Endothelial cell of umbilical vein (primary cell): ENCODE measurements at regions of chr12 and their contacts with region 1.

Region 1: DNA sequence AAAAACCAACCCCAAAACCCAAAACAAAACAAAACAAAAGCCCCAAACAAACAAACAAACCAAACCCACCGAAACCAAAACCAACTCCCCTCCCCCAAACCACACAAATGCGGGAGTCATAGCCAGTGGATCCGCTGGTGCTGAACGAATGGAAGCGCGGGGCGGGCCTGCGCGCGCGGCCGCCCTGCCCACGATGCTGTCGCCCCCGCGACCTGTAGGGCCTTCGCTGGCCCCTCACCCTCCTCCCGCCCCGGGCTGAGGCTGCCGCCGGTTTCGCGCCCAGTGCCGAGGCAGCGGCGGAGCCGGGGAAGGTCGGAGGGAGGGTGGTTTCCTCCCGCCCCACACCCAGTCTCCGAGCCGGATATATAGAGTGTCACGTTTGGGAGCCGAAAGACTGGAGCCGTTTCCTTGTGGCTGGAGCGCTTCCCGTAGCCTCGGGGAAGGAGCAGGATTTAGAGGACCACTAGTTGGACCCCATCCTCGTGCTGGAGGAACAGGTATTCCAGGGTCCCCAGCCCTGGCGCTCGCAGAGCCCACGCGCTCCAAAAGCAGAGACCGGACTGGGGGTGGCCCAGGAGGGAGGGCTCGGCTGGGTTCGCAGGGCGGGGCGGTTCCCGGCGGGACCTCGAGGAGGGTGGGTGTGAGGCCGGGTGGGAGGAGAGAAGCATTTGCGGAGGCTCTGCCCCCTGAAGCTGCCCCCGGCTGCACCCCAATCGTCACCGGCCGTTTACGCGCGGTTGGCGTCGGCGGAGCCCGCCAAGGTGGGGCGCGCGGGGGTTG is at the start of gene FAR2:
- DNase-seq: peak; percentile 61
- H3K4me3 ChIP-seq: peak within 1 kb of the TSS; percentile 67 to 80 (median 75)
- H3K27ac ChIP-seq: peak within 1 kb of the TSS; percentile 91
- H3K4me1 ChIP-seq: peaks cover 29% of the 10 kb centered on the region
- H3K27me3 ChIP-seq: no peaks in the 10 kb centered on the region
- CTCF ChIP-seq: no peak
- POLR2A ChIP-seq: peak; percentile 79
- total RNA-seq, gene FAR2: 61.7 and 66.3 TPM in 2 replicates

Region 2: GRCh38 chr12:28865776-28866175 is 283.3 kb before region 1 on chr12:
- CTCF ChIA-PET with region 1: no interaction called
- POLR2A ChIA-PET with region 1: no interaction called
- dilution Hi-C with region 1: no loop called
- intact Hi-C with region 1: no loop called
- DNase-seq: no peak
- H3K4me3 ChIP-seq: no peak overlapping the region
- H3K27ac ChIP-seq: no peak overlapping the region
- H3K4me1 ChIP-seq: no peaks in the 10 kb centered on the region
- H3K27me3 ChIP-seq: no peaks in the 10 kb centered on the region
- CTCF ChIP-seq: no peak
- POLR2A ChIP-seq: no peak

Region 3: GRCh38 chr12:29131539-29131938 is 17.6 kb before region 1 on chr12:
- CTCF ChIA-PET with region 1: no interaction called
- POLR2A ChIA-PET with region 1: no interaction called
- dilution Hi-C with region 1: no loop called
- intact Hi-C with region 1: no loop called
- DNase-seq: peak; percentile 27
- H3K4me3 ChIP-seq: no peak overlapping the region
- H3K27ac ChIP-seq: no peak overlapping the region
- H3K4me1 ChIP-seq: peaks cover 3% of the 10 kb centered on the region
- H3K27me3 ChIP-seq: no peaks in the 10 kb centered on the region
- CTCF ChIP-seq: no peak
- POLR2A ChIP-seq: no peak

Region 4: DNA sequence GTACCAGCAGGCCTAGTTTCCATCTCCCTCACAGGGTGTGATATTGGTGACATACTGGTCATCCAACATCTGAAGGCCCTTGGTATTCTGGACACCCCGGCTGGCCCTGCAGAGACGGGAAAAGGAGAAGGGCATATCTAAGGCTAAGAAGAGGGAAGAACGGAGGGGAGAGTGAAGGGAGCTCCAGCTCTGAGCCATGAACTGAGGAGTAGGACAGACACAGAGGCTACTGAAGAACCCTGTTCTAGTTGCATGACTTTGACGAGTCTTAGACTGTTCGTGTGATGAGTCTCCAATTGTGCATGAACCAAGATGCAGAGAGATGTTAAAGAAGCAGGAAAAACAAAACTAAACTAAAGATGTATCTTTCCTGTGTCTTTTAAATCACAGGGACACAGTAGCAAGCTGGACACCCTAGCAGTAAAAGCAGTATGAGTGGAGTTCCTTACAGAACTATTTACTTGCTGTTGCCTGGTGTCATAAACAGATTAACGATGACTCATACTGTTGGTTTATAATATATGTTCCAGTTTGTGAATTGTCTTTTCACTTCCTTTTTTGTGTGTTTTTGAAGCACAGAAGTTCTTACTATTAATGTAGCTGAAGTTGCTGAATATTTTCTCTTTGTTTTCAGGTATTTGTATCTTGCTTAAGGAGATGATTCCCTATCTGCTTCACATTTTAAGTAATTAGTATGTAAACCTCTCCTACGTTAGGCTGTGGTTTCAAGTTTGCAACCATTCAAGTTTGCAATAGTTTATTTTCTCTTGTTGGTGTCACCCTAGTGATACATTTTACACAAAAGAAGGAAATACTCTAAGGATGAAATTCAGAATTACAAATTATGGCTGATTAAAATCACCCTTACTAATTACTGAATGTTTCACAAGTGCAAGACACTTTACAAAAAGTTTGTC is 15.6 kb after region 1 on chr12:
- CTCF ChIA-PET with region 1: interaction called, 3 read pairs
- POLR2A ChIA-PET with region 1: no interaction called
- dilution Hi-C with region 1: no loop called
- intact Hi-C with region 1: loop called (anchors 1 kb)
- DNase-seq: peak; percentile 85
- H3K4me3 ChIP-seq: no peak overlapping the region
- H3K27ac ChIP-seq: peak overlapping the region; percentile 82
- H3K4me1 ChIP-seq: peaks cover 26% of the 10 kb centered on the region
- H3K27me3 ChIP-seq: no peaks in the 10 kb centered on the region
- CTCF ChIP-seq: no peak
- POLR2A ChIP-seq: no peak

Region 5: DNA sequence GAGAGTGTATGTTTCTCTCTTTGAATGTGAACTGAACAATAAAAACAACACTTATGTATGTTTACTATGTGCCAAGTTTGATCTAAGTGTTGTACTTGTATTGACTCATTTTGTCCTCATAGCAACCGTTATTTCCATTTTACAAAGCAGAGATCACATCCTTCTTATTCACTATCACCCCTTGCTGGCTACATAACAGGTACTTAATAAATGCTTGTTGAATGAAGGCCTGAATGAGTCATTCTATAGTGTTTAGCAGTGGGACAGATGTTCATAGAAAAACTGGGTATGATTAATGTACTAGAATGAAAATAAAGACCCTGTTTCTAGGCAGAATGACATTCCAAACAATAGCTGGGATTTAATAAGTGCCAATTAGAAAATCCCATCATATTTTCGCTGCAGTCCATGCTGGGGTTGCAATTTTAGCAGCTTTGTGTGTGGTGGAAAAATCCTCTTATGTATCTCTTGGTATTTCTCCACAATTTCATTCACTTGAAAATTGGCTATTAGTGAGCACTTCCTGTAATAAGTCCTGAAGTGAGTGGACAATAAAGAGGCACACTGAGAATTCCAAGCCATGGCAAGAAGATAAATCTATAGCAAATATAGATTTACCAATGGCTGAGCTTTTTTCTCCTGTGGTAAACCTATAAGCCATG is 86.0 kb after region 1 on chr12:
- CTCF ChIA-PET with region 1: interaction called, 3 read pairs
- POLR2A ChIA-PET with region 1: no interaction called
- dilution Hi-C with region 1: no loop called
- intact Hi-C with region 1: loop called (anchors 1 kb)
- DNase-seq: peak; percentile 97
- H3K4me3 ChIP-seq: no peak overlapping the region
- H3K27ac ChIP-seq: peak overlapping the region; percentile 82
- H3K4me1 ChIP-seq: peaks cover 58% of the 10 kb centered on the region
- H3K27me3 ChIP-seq: no peaks in the 10 kb centered on the region
- CTCF ChIP-seq: no peak
- POLR2A ChIP-seq: no peak

Region 6: DNA sequence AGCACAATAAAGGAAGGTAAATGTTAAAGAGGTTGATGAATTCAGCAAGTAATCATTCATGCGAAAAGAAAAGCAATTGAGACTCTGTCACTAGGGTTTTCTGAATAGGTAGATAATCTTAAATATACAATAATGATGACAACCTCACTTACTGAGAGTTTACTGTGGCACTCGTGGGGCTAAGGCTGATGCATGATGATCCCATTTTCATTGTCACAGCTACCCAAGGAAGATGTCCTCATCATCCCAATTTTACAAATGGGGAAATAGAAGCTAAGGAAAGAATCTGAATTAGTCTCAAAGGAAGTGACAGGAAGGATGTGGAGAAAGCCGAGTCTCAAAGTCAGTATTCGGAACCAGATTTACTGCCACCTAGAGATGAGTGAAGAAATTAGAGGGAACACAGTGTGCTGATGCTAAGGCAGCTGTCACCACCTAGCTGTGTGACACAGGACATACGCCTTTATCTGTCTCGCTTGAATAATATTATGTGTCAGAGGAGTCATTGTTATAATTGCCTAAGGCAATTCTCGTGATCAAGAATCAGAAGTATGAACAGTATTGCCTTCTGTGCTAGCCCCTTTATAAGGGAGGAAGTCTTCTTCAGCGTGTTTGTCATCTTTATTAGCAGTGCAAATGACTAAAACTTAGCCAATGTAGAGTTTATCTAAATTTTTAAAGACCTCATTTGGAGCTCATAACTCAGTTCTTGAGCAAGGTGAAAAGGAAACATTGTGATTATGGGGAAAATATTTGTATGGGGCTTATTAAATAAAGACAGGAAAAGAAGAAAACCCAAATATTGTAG is 168.7 kb after region 1 on chr12:
- CTCF ChIA-PET with region 1: no interaction called
- POLR2A ChIA-PET with region 1: no interaction called
- dilution Hi-C with region 1: no loop called
- intact Hi-C with region 1: loop called (anchors 1 kb)
- DNase-seq: peak; percentile 72
- H3K4me3 ChIP-seq: no peak overlapping the region
- H3K27ac ChIP-seq: no peak overlapping the region
- H3K4me1 ChIP-seq: peaks cover 17% of the 10 kb centered on the region
- H3K27me3 ChIP-seq: no peaks in the 10 kb centered on the region
- CTCF ChIP-seq: peak; percentile 61 to 66
- POLR2A ChIP-seq: no peak

Region 7: DNA sequence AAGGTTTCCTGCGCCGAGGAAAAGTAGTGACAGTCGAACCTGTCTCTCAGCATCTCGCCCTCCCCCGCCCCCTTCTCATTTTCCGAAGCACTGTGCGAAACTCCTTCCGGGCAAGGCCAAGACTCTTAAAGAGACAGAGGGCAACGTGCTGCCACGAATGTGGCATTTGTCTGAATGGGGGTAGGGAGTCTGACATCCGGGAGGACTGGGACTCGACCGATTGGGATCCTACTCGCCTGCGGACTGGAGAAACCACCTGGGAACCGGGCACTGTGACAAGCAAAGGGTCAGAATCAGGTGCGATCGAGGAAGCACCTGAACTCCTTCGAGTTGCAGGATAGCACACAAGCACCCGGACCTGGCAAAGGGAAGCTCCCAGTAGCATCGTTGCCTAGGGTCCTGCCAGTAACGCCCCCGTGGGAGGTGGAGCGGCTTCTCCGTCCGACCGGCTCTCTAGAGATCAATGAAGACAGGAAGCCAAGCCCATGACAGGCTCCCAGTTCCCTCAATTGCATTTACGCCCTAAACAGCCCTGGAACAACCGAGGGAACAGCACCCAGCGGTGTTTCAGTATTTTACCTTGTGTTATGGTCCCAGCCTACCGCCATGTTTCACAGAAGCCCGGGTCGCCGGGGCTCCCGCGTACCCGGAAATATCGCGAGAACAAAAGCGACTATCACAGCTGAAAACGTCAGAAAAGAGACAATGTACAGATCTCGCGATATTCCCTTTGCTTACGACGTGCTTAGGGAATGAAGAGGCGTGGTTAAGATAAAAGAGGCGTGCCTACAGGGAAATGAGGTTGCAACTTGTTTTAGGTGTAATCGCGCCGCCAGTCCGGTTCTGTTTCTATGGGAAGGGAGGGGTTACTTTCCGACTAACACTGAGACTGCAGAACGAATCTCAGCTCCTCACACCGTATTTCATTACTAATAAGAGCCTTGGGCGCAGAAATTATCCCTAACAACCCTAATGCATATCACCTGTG is 231.7 kb after region 1 on chr12 and contains the start of gene ERGIC2:
- CTCF ChIA-PET with region 1: no interaction called
- POLR2A ChIA-PET with region 1: no interaction called
- dilution Hi-C with region 1: no loop called
- intact Hi-C with region 1: loop called (anchors 5 kb)
- DNase-seq: peak; percentile 98
- H3K4me3 ChIP-seq: peak within 1 kb of the TSS; percentile 44 to 97 (median 87)
- H3K27ac ChIP-seq: peak within 1 kb of the TSS; percentile 76
- H3K4me1 ChIP-seq: peaks cover 12% of the 10 kb centered on the region
- H3K27me3 ChIP-seq: peaks cover 0 to 4% of the 10 kb centered on the region in 2 experiments
- CTCF ChIP-seq: no peak
- POLR2A ChIP-seq: peak; percentile 65
- total RNA-seq, gene ERGIC2: 57.6 and 60.6 TPM in 2 replicates